SK-N-SH (cell line): ENCODE measurements at regions of chr16 and their contacts with region 1.

Region 1: DNA sequence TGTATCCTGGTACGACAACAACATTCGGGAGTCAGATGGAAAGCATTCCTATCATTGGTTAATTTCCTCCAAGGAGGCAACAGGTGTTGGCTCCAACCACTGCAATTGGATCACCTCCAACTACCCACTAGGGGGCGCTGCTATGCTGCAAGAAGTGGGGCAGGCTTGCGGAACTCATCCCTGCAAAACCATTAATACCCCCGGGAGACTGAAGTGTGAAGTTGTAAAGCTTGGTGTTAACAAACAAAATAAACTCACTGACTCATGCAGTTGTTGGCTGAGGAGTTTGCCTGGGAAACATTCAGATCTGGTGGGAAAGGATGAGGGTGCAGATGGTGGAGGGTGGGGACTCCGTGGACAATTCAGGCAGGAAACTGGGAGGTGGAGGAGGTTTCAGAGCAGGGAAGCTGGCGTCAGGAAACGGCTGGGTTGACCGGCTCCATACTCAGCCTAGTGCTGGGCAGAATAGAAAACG is 84.9 kb downstream of the HS3ST2 start:
- DNase-seq: peak; percentile 73
- H3K4me3 ChIP-seq: peak overlapping the region in 1 of 2 experiments; percentile 34; a peak in 1 of 4 replicates
- H3K27ac ChIP-seq: no peak overlapping the region
- H3K4me1 ChIP-seq: peaks cover 0 to 4% of the 10 kb centered on the region in 2 experiments; a peak in 1 of 4 replicates
- H3K27me3 ChIP-seq: no peaks in the 10 kb centered on the region
- CTCF ChIP-seq: peak; percentile 86
- EP300 ChIP-seq: no peak
- RAD21 ChIP-seq: peak; percentile 94

Region 2: DNA sequence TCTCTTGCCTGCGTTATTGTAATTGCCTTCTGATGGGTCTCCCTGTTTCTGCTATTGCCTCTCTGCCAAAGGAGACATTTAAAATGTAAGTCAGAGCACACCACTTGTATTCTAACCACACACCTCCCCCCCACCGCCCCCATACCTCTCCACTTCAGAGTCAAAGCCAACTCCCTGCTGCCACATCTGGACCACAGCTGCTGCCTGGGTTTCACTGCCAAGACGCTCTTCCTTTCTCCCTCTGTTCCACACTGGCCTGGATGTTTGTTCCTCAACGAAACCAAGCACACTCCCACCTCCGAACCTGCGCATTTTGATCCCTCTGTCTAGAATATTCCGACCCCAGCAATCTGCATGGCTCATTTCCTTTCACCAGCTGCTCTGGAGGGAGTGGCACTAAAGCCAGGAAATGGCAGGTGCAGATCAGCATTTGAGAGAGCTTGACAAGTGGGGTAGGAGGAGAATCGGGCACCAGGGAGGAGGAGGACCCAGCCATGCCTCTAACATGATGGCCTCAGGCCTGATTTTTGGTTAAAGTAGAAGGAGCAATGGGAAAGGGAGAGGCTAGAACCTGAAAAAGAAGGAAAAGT is 177.3 kb before region 1 on chr16:
- CTCF ChIA-PET with region 1: no interaction called
- POLR2A ChIA-PET with region 1: no interaction called
- DNase-seq: peak; percentile 68
- H3K4me3 ChIP-seq: no peak overlapping the region
- H3K27ac ChIP-seq: peak overlapping the region in 1 of 2 experiments; percentile 31; a peak in 1 of 4 replicates
- H3K4me1 ChIP-seq: peaks cover 0 to 17% of the 10 kb centered on the region in 2 experiments; a peak in 1 of 4 replicates
- H3K27me3 ChIP-seq: no peaks in the 10 kb centered on the region; the same call in 1 of the 2 replicates
- CTCF ChIP-seq: no peak
- EP300 ChIP-seq: no peak
- RAD21 ChIP-seq: no peak

Region 3: DNA sequence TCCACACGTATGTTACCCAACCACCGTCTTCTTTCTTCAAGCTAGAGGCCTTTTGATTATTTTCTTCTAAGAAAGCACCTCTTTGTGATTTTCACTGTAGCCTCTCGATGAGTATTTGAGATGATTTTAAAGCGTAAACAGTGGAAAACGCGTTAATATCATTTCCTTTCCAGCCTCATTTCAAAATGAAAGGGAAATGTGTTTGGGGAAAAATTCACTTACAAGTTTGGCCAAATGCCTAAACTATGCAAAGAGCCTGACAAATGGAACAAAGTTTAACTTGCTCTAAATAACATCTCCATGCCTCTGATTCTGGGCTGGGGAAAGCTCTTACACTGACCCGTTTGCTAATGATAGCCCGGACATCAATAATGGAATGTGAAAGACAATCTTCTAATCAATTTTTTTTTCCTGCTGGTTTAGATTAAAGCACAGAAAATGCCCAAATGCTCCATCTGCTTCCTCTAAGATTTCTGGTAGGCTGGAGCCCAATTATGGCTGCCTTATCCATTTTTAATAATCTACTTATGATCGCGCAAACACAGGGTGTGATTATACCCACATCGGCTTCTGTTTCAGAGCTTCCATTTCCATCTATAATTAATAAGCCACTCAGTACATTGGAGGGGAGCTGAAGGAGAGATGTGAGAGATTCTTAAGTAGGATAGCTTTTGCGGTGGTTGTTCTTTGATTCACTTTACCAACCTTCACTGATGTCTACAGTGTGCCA is 41.5 kb before region 1 on chr16:
- CTCF ChIA-PET with region 1: interaction called, 11 read pairs
- POLR2A ChIA-PET with region 1: no interaction called
- DNase-seq: no peak
- H3K4me3 ChIP-seq: no peak overlapping the region
- H3K27ac ChIP-seq: no peak overlapping the region
- H3K4me1 ChIP-seq: no peaks in the 10 kb centered on the region
- H3K27me3 ChIP-seq: no peaks in the 10 kb centered on the region
- CTCF ChIP-seq: no peak
- EP300 ChIP-seq: no peak
- RAD21 ChIP-seq: no peak

Region 4: GRCh38 chr16:22882981-22883380 is 15.9 kb before region 1 on chr16:
- CTCF ChIA-PET with region 1: interaction called, 22 read pairs
- POLR2A ChIA-PET with region 1: no interaction called
- DNase-seq: no peak
- H3K4me3 ChIP-seq: no peak overlapping the region
- H3K27ac ChIP-seq: no peak overlapping the region
- H3K4me1 ChIP-seq: peaks cover 0 to 12% of the 10 kb centered on the region in 2 experiments; a peak in 1 of 4 replicates
- H3K27me3 ChIP-seq: no peaks in the 10 kb centered on the region
- CTCF ChIP-seq: no peak
- EP300 ChIP-seq: no peak
- RAD21 ChIP-seq: no peak

Region 5: GRCh38 chr16:22948603-22949368 is 49.9 kb after region 1 on chr16:
- CTCF ChIA-PET with region 1: interaction called, 25 read pairs
- POLR2A ChIA-PET with region 1: no interaction called
- DNase-seq: peak; percentile 77
- H3K4me3 ChIP-seq: peak overlapping the region in 1 of 2 experiments; percentile 46; a peak in 1 of 4 replicates
- H3K27ac ChIP-seq: no peak overlapping the region
- H3K4me1 ChIP-seq: no peaks in the 10 kb centered on the region
- H3K27me3 ChIP-seq: no peaks in the 10 kb centered on the region
- CTCF ChIP-seq: peak; percentile 66
- EP300 ChIP-seq: no peak
- RAD21 ChIP-seq: peak; percentile 72

Region 6: DNA sequence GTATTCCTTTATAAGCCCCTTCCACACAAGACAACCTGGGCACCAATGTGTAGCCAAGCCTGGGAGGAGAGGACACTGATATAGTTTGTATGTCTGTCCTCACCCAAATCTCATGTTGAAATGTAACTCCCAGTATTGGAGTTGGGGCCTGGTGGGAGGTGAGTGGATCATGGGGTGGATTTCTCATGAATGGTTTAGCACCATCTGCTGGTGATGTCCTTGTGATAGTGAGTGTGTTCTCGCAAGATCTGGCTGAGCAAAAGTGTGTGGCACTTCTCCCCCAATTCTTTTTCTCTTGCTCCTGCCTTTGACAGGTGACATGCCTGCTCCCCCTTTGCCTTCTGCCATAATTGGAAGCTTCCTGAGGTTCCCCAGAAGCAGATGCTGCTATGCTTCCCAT is 114.6 kb after region 1 on chr16:
- CTCF ChIA-PET with region 1: interaction called, 12 read pairs
- POLR2A ChIA-PET with region 1: no interaction called
- DNase-seq: no peak
- H3K4me3 ChIP-seq: no peak overlapping the region
- H3K27ac ChIP-seq: no peak overlapping the region
- H3K4me1 ChIP-seq: no peaks in the 10 kb centered on the region
- H3K27me3 ChIP-seq: no peaks in the 10 kb centered on the region
- CTCF ChIP-seq: peak; percentile 25; the same call in 1 of the 2 replicates
- EP300 ChIP-seq: no peak
- RAD21 ChIP-seq: no peak

Region 7: GRCh38 chr16:23060458-23061320 is 161.8 kb after region 1 on chr16:
- CTCF ChIA-PET with region 1: interaction called, 142 read pairs
- POLR2A ChIA-PET with region 1: interaction called, 4 read pairs
- DNase-seq: peak; percentile 75
- H3K4me3 ChIP-seq: no peak overlapping the region; a peak in 1 of 4 replicates
- H3K27ac ChIP-seq: no peak overlapping the region
- H3K4me1 ChIP-seq: peaks cover 0 to 2% of the 10 kb centered on the region in 2 experiments; a peak in 1 of 4 replicates
- H3K27me3 ChIP-seq: no peaks in the 10 kb centered on the region
- CTCF ChIP-seq: peak; percentile 85
- EP300 ChIP-seq: no peak
- RAD21 ChIP-seq: peak; percentile 92